ENCODE measurements at regions of chr18 and their contacts with region 1.

Region 1: DNA sequence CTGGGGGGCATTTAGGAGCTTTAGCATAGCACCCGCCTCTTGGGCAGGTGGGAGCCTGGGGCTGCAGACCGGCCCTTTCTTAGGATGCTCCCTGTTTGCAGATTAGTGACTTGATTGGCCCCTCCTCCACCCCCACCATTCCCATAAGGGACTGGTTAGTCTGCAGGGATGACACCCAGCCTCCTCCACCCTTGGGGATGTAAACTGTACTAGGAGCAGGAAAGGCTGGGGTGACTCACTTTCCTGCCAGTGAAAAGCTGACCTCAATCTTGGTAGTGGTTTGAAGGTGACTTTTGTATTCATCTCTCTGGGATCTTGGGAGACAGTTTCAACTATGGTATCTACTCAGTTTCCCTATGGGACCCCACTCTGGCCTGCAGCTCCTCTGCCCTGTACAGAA is 24.2 kb downstream of the CTIF start:
- DNase-seq: peak; percentile 79
- H3K4me3 ChIP-seq: no peak overlapping the region
- H3K27ac ChIP-seq: peak overlapping the region; percentile 45
- H3K4me1 ChIP-seq: peaks cover 39% of the 10 kb centered on the region
- H3K27me3 ChIP-seq: no peaks in the 10 kb centered on the region
- CTCF ChIP-seq: no peak
- POLR2A ChIP-seq: no peak

Region 2: DNA sequence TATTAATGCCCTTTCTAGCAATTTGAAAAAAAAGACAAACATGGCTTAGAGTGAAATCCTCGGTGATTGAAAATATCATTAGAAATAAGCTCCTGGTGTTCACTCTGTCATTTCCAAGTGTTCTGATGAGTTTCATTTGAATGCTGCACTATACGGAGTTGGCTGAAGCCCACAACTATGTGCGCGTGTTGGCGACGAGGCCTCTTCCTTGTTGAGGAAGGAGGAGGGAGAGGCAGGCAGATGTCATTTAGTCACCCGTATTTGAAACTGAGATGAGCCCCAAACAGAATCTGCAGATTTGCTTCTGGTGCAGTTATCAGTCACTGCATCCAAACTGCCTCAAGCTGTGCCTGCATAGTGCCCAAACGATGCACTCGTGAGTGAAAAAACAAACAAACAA is 1288.1 kb before region 1 on chr18:
- CTCF ChIA-PET with region 1: no interaction called
- POLR2A ChIA-PET with region 1: no interaction called
- dilution Hi-C with region 1: no loop called
- intact Hi-C with region 1: no loop called
- DNase-seq: no peak
- H3K4me3 ChIP-seq: no peak overlapping the region
- H3K27ac ChIP-seq: no peak overlapping the region
- H3K4me1 ChIP-seq: no peaks in the 10 kb centered on the region
- H3K27me3 ChIP-seq: no peaks in the 10 kb centered on the region
- CTCF ChIP-seq: no peak
- POLR2A ChIP-seq: no peak

Region 3: GRCh38 chr18:48475635-48476549 is 87.2 kb before region 1 on chr18:
- CTCF ChIA-PET with region 1: interaction called, 5 read pairs
- POLR2A ChIA-PET with region 1: no interaction called
- dilution Hi-C with region 1: no loop called
- intact Hi-C with region 1: loop called (anchors 2 kb)
- DNase-seq: peak; percentile 78
- H3K4me3 ChIP-seq: no peak overlapping the region
- H3K27ac ChIP-seq: no peak overlapping the region
- H3K4me1 ChIP-seq: peaks cover 2% of the 10 kb centered on the region
- H3K27me3 ChIP-seq: peaks cover 6 to 11% of the 10 kb centered on the region in 2 experiments
- CTCF ChIP-seq: peak; percentile 80 to 86
- POLR2A ChIP-seq: no peak

Region 4: GRCh38 chr18:48488388-48488850 is 74.6 kb before region 1 on chr18:
- CTCF ChIA-PET with region 1: no interaction called
- POLR2A ChIA-PET with region 1: no interaction called
- dilution Hi-C with region 1: no loop called
- intact Hi-C with region 1: loop called (anchors 1 kb)
- DNase-seq: peak; percentile 97
- H3K4me3 ChIP-seq: no peak overlapping the region
- H3K27ac ChIP-seq: peak overlapping the region; percentile 57
- H3K4me1 ChIP-seq: peaks cover 21% of the 10 kb centered on the region
- H3K27me3 ChIP-seq: no peaks in the 10 kb centered on the region
- CTCF ChIP-seq: no peak
- POLR2A ChIP-seq: peak; percentile 55

Region 5: GRCh38 chr18:48545757-48546321 is 17.2 kb before region 1 on chr18:
- CTCF ChIA-PET with region 1: interaction called, 3 read pairs
- POLR2A ChIA-PET with region 1: interaction called, 4 read pairs
- dilution Hi-C with region 1: no loop called
- intact Hi-C with region 1: loop called (anchors 1 kb)
- DNase-seq: peak; percentile 92
- H3K4me3 ChIP-seq: no peak overlapping the region
- H3K27ac ChIP-seq: peak overlapping the region; percentile 85
- H3K4me1 ChIP-seq: peaks cover 33% of the 10 kb centered on the region
- H3K27me3 ChIP-seq: no peaks in the 10 kb centered on the region
- CTCF ChIP-seq: no peak
- POLR2A ChIP-seq: no peak

Region 6: DNA sequence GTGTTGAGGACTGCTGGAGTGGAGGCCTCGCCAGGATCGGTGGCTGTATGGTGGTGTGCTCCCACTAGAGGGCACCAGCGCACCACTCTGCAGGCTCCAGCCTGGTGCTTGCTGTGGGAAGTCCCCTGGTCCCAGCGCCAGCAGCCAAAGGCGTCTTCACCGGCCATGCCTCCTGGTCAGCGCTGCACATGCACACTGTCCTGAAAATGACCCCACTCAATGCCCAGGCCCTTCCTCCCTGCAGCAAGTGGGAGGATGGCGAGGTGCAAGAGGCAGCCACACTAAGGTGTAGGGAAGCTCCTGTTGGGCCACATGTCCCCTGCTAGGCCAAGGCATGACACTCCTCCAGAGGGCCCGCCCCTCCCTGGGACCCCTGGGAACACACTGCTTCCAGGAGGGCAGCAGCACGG is 112.3 kb after region 1 on chr18:
- CTCF ChIA-PET with region 1: no interaction called
- POLR2A ChIA-PET with region 1: no interaction called
- dilution Hi-C with region 1: no loop called
- intact Hi-C with region 1: no loop called
- DNase-seq: peak; percentile 82
- H3K4me3 ChIP-seq: no peak overlapping the region
- H3K27ac ChIP-seq: no peak overlapping the region
- H3K4me1 ChIP-seq: peaks cover 6% of the 10 kb centered on the region
- H3K27me3 ChIP-seq: no peaks in the 10 kb centered on the region
- CTCF ChIP-seq: peak; percentile 90 to 96
- POLR2A ChIP-seq: no peak

Region 7: GRCh38 chr18:49169037-49169521 is 606.0 kb after region 1 on chr18:
- CTCF ChIA-PET with region 1: no interaction called
- POLR2A ChIA-PET with region 1: no interaction called
- dilution Hi-C with region 1: no loop called
- intact Hi-C with region 1: no loop called
- DNase-seq: no peak
- H3K4me3 ChIP-seq: no peak overlapping the region
- H3K27ac ChIP-seq: no peak overlapping the region
- H3K4me1 ChIP-seq: no peaks in the 10 kb centered on the region
- H3K27me3 ChIP-seq: no peaks in the 10 kb centered on the region
- CTCF ChIP-seq: no peak
- POLR2A ChIP-seq: no peak